Left ventricle myocardium superior (tissue), 1 donor: ENCODE measurements at regions of chrX and their contacts with region 1.

Region 1: GRCh38 chrX:19887911-19888879 is 795 bp upstream of the SH3KBP1 start:
- DNase-seq: peak; percentile 43
- ATAC-seq: peak; percentile 82

Region 2: GRCh38 chrX:19382555-19383145 is 505.5 kb before region 1 on chrX:
- intact Hi-C with region 1: loop called (anchors 10 kb)
- DNase-seq: peak; percentile 57
- ATAC-seq: peak; percentile 64

Region 3: DNA sequence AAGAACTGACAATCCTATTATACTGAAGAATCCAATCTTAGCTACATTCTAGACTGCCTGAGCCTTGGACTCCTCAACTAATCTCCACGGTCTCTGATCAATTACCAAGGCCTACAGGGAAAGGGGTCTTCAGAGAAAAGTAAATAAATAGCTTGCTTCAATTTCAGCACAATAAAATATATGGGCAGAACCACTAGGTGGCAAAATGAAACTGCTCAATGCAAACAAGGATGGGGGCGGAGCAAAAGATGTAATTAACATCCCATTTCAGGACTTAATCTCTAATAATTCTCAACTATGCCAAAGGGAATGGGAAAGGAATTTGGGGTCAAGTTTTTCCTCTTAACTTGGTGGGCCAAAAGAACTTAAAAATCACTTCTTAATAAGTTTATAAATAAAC is 294.5 kb before region 1 on chrX:
- intact Hi-C with region 1: loop called (anchors 5 kb)
- DNase-seq: no peak
- ATAC-seq: peak; percentile 45

Region 4: DNA sequence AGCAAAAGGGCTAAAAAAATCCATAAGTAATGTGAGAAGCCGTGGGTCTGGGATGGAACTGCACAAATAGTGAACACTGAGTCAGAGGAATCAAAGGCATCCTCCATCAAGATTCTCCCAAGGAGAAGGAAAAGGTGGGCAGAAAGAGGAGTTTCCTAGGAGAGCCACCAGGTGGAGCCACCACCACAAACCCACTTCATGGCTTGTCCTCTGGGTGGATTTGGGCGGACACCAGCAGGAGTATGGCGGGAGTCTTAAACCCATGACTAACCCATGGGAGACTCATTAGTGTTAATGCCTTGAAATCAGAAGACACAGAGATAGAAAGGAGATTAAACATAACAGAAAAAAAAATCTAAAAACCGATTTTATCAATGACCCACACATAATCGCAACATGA is 148.5 kb before region 1 on chrX:
- intact Hi-C with region 1: loop called (anchors 10 kb)
- DNase-seq: peak; percentile 54
- ATAC-seq: peak; percentile 64

Region 5: GRCh38 chrX:19964017-19964710 is 76.0 kb after region 1 on chrX:
- intact Hi-C with region 1: no loop called
- DNase-seq: no peak
- ATAC-seq: no peak